Activated T-helper 2 cell treated with anti-CD3 and anti-CD28 coated beads, Interferon-gamma antibody, Interleukin-2, Interleukin-4, amounts not matched to agents 10 μg/mL and 5 μg/mL and 100 μg/mL, durations not matched to agents 14 hours and 24 hours and 36 hours (primary cell): ENCODE measurements at regions of chr10 and their contacts with region 1.

Region 1: GRCh38 chr10:11270135-11270857 is 252.6 kb downstream of the CELF2 start:
- DNase-seq: peak; percentile 45
- H3K4me3 Mint-ChIP-seq: no peak overlapping the region
- H3K27ac Mint-ChIP-seq: peak overlapping the region; percentile 73
- H3K4me1 Mint-ChIP-seq: peaks cover 64% of the 10 kb centered on the region
- H3K27me3 Mint-ChIP-seq: no peaks in the 10 kb centered on the region

Region 2: GRCh38 chr10:11017570-11018431 is 252.5 kb before region 1 on chr10 and contains the start of gene CELF2:
- intact Hi-C with region 1: loop called (anchors 5 kb)
- DNase-seq: peak; percentile 31
- H3K4me3 Mint-ChIP-seq: peak within 1 kb of the TSS; percentile 57
- H3K27ac Mint-ChIP-seq: no peak within 1 kb of the TSS
- H3K4me1 Mint-ChIP-seq: peaks cover 7% of the 10 kb centered on the region
- H3K27me3 Mint-ChIP-seq: peaks cover 82% of the 10 kb centered on the region
- total RNA-seq, gene CELF2: 131 and 134 TPM in 2 replicates

Region 3: DNA sequence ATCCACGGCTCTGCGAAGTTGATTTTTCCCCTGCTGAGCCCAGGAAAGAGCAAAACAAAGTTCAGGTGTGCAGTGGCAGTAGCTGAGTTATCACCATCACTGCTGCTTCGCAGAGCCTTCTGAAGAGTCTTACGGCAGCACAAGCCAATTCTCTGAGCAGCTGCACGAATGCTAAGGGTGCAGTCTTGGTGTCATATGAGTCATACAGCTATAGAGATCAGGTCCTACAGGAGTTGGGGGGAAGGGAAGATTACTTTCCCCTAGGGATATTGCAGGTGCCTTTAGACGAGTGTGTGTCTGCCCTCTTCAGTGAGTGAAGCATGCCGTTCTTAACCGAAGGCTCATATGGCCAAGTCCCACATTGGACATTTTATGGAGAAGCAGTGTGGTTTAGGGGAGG is 24.8 kb before region 1 on chr10:
- intact Hi-C with region 1: no loop called
- DNase-seq: no peak
- H3K4me3 Mint-ChIP-seq: no peak overlapping the region
- H3K27ac Mint-ChIP-seq: no peak overlapping the region
- H3K4me1 Mint-ChIP-seq: peaks cover 35% of the 10 kb centered on the region
- H3K27me3 Mint-ChIP-seq: no peaks in the 10 kb centered on the region